Head of caudate nucleus (tissue), 42 donors: ENCODE measurements at regions of chr3 and their contacts with region 1.

Region 1: DNA sequence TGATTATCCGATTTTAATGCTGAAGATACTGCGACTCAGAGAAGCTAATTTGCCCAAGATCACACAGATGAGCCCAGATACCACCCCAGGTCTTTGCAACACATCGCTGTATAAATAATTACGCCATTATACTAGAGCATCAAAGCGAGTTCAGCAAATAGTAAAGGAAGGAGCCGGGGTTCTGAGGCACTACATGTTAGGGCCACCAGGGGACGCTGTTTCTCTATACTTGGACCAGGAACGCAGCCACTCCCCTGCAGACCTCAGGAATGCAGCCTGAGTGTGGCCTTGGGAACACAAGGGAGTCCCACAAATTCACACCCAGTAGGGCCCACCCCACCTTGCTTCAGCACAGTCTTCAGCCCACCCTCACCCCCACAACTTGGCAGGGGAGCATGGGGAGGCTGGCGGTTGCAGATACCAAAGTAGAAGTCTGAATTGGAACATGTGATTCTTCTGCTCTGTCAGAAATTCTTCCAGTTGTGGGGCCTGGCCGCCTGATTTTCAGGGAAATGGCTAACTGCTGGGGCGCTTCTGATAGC is 57.8 kb upstream of the RYK start:
- DNase-seq: peak; percentile 67 to 96 (median 88)

Region 2: DNA sequence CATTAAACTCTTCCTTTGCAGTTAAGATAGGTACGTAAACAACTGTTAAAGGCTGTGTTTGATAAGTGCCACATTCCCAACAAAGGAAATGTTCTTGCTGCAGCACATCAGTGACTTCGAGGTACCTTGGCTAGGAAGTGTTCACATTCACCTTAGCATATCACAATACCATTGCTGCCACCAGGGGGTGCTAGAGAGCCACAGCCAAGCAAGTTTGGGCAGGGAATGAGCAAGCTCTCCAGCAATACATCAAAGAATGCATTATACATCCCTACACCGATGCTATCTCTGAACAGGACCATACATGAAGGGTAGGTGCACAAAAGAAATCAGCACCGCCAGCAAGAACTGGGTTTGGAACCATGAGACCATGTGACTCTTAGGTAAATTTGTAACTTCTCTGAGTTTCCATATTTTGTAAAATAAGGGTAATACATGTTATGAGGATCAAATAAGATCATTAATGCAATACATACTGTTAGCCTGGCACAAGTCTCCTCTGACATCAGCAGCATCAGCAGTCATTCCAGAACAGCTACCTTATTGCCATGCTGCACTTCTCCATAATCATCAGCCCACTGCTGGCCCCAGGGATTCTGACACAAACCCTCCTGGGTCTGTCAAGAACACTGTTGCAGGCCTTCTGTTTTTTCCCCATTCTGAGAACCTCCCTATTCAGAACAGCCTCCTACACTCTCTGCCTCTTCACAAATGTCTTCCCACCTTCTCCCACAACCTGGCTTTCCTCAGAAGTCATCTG is 95.3 kb before region 1 on chr3:
- intact Hi-C with region 1: loop called (anchors 5 kb)
- DNase-seq: peak; percentile 47 to 96 (median 90)

Region 3: GRCh38 chr3:134364061-134364935 is 55.9 kb after region 1 on chr3:
- intact Hi-C with region 1: loop called (anchors 5 kb)
- DNase-seq: peak; percentile 66 to 94 (median 84)

Region 4: DNA sequence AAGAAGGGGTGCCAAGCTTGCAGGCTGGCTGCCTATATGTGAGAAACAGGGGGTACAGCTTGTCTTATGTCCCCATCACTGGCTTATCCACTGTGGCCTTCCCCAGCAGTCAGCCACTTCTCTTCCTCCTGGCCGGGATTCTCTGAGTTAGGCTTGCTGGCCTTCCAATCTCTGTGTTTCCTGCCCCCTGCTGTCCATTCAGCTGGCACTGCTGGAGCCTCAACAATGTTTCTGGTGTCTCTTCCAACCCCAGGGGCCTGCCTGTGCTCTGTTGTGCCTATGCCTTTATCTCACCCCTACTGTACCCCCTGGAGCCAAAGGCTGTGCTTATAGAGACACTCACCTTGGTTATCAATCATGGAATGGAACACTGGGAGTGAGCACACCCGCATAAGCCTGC is 140.9 kb after region 1 on chr3:
- intact Hi-C with region 1: loop called (anchors 10 kb)
- DNase-seq: peak; percentile 37 to 89 (median 75)

Region 5: DNA sequence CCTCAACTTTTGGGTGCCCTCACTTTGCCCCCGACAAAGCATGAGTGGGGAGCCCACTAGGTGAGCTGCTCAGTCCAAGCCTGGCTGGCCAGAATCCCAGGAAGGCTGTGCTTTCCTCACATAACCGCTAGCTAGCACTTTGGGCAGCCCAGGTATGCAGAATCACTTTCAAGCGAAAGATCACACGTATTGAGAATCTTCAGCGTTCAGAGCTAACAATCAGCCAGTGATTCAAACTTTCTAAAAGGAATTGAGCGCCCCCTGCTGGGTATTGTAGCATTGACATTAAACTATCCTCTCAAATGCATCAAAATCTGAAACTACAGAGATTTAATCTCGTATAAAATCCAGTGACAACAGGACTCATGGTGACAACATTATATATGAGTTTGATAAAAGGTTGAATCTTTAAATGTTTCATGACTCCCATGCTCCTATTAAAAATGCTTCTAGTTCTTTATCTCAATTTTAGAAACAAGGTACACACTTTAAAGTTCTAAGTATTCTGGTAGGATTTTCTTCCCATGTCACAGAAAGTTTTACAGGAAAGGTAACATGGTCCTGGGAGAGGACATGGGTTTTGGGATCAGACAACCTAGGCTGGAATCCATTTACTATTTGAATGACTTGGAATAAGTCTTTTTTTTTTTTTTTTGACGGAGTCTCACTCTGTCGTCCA is 165.6 kb after region 1 on chr3:
- intact Hi-C with region 1: loop called (anchors 2 kb)
- DNase-seq: peak in 40 of 42 donors; percentile 23 to 96 (median 84)